PC-9 (cell line): ENCODE measurements at regions of chr10 and their contacts with region 1.

Region 1: GRCh38 chr10:65213170-65213569 is 1692.0 kb downstream of the REEP3 start:
- DNase-seq: no peak
- H3K4me3 ChIP-seq: no peak overlapping the region
- H3K27ac ChIP-seq: no peak overlapping the region
- H3K4me1 ChIP-seq: no peaks in the 10 kb centered on the region
- H3K27me3 ChIP-seq: no peaks in the 10 kb centered on the region
- CTCF ChIP-seq: no peak

Region 2: DNA sequence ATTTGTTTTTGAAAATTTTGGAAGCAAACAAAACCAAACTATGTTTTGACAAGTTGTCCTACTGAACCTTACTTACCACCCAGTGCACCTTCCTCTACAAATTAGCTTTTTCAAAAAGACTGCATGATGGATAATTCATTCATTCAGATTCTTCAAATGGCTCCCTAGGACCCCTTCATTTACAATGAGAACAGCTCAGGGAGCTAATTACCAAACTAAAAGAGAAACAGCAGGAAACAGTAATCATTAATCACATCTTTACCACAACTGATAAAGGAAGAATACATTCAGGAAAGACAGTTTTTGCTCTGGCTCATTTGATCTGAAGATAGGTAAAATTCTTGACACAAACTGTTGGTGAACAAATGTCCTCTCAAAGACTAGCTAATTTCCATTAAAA is 59.9 kb after region 1 on chr10:
- CTCF ChIA-PET with region 1: no interaction called
- POLR2A ChIA-PET with region 1: no interaction called
- intact Hi-C with region 1: no loop called
- DNase-seq: no peak
- H3K4me3 ChIP-seq: no peak overlapping the region
- H3K27ac ChIP-seq: no peak overlapping the region
- H3K4me1 ChIP-seq: no peaks in the 10 kb centered on the region
- H3K27me3 ChIP-seq: no peaks in the 10 kb centered on the region
- CTCF ChIP-seq: no peak

Region 3: DNA sequence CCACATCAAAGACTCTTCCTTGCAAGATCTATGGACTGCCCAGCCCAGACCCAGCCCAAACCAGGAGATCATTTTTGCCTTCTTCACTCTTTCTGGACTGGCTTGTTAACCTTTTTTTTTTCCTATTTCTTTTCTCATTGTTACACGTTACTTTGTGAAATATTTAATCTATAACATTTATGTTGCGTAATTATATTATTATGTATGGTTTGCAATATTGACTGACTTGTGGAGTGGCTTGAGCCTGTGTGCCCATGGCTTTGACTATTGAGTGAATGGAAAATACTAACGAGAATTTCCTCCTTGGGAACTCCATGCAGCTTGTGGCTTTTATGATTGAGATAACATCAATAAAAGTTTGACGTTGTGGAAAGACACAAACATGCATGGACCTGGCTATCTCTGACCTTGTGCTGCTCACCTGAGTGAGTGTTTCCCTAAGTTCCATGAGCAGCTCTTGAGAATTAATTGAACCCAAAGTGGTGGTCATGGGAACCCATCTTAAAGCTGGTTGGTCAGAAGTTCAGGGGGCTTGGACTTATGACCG is 71.4 kb after region 1 on chr10:
- CTCF ChIA-PET with region 1: no interaction called
- POLR2A ChIA-PET with region 1: interaction called, 26 read pairs
- intact Hi-C with region 1: no loop called
- DNase-seq: no peak
- H3K4me3 ChIP-seq: no peak overlapping the region
- H3K27ac ChIP-seq: no peak overlapping the region
- H3K4me1 ChIP-seq: no peaks in the 10 kb centered on the region
- H3K27me3 ChIP-seq: no peaks in the 10 kb centered on the region
- CTCF ChIP-seq: no peak

Region 4: DNA sequence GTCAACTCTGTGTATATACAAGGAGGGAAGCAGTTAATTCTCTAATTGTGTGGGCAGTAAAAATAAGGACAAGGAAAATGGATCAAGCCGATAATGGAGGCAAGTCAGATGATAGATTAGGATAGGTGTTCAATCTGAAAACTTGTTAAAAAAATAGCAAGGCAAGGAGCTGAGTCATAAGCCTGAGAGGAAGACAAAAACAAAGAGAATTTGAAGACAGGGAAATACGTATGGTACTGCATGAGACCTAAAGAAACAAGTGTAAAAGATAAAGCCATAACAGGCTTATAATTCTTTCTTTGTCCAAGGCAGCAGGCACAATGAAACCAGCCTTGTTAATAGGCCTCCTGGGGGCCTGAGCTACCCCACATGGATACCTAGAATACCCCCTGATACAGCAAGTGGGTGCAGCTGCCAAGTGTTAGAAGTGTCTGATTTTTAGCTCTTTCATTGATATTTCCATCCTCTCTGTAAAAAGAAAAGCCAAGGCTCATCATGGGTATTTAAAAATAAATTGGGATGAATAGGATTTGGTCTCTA is 142.0 kb after region 1 on chr10:
- CTCF ChIA-PET with region 1: no interaction called
- POLR2A ChIA-PET with region 1: interaction called, 18 read pairs
- intact Hi-C with region 1: no loop called
- DNase-seq: no peak
- H3K4me3 ChIP-seq: no peak overlapping the region
- H3K27ac ChIP-seq: no peak overlapping the region
- H3K4me1 ChIP-seq: no peaks in the 10 kb centered on the region
- H3K27me3 ChIP-seq: no peaks in the 10 kb centered on the region
- CTCF ChIP-seq: no peak